OCI-LY7 (cell line): ENCODE measurements at regions of chr1 and their contacts with region 1.

Region 1: GRCh38 chr1:27097484-27097917 is 57.4 kb downstream of the SLC9A1 start:
- DNase-seq: peak; percentile 72
- H3K4me3 ChIP-seq: no peak overlapping the region
- H3K27ac ChIP-seq: no peak overlapping the region
- H3K4me1 ChIP-seq: peaks cover 15% of the 10 kb centered on the region
- CTCF ChIP-seq: peak; percentile 96

Region 2: DNA sequence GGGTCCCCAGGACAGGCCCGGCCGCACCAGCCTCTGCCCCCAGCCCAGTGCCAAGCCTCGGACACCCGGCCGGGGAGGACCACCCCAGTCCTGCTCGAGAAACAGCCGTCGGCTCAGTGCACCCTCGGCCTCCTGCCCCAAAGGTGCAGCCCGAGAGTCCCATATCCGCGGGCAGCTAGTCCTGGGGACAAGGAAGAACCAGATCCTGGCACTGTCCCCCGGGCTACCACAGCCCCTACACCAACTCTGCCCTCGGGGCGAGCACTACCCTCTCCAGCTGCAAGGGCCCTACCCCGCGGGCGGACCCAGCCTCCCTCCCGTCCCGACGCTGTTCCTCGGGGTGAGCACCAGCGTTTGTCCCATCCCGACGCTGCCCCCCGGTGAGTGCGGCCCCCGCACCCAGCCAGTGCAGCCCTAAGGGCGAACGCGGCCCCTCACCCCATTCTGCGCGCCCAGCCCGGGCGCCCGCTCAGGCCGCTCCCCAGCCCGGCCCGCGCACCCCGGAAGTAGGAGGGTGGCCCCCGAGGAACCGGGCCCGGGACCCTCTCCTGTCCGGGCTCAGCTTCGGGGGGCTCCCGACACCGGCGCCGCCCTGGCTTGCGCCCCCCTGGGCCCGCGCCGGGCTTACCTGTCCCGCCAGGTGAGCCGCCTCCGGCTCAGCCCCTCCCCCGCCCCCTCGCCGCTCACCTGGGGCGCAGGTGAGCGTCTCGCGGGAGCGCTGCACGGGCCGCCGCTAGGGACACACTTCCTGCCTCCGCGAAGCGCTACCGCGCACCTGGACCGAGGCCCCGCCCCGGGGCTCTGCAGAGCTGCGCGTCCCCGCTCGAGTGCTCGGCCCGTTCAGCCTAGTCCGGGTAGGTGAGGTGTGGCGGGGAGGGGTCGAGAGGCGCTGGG is 137.5 kb before region 1 on chr1 and contains the start of gene KDF1:
- CTCF ChIA-PET with region 1: no interaction called
- POLR2A ChIA-PET with region 1: no interaction called
- intact Hi-C with region 1: loop called (anchors 10 kb)
- DNase-seq: no peak
- H3K4me3 ChIP-seq: no peak within 1 kb of the TSS
- H3K27ac ChIP-seq: no peak within 1 kb of the TSS
- H3K4me1 ChIP-seq: no peaks in the 10 kb centered on the region
- CTCF ChIP-seq: no peak
- total RNA-seq, gene KDF1: not detected in 2 replicates

Region 3: GRCh38 chr1:26996665-26997064 is 100.8 kb before region 1 on chr1:
- CTCF ChIA-PET with region 1: no interaction called
- POLR2A ChIA-PET with region 1: interaction called, 4 read pairs
- intact Hi-C with region 1: loop called (anchors 1 kb)
- DNase-seq: no peak
- H3K4me3 ChIP-seq: no peak overlapping the region
- H3K27ac ChIP-seq: no peak overlapping the region
- H3K4me1 ChIP-seq: peaks cover 2% of the 10 kb centered on the region
- CTCF ChIP-seq: no peak

Region 4: GRCh38 chr1:27044613-27045151 is 52.8 kb before region 1 on chr1:
- CTCF ChIA-PET with region 1: interaction called, 4 read pairs
- POLR2A ChIA-PET with region 1: interaction called, 4 read pairs
- intact Hi-C with region 1: loop called (anchors 1 kb)
- DNase-seq: peak; percentile 86
- H3K4me3 ChIP-seq: no peak overlapping the region
- H3K27ac ChIP-seq: no peak overlapping the region
- H3K4me1 ChIP-seq: peaks cover 12% of the 10 kb centered on the region
- CTCF ChIP-seq: peak; percentile 88

Region 5: GRCh38 chr1:27111626-27112573 is 14.4 kb after region 1 on chr1:
- CTCF ChIA-PET with region 1: interaction called, 26 read pairs
- POLR2A ChIA-PET with region 1: no interaction called
- intact Hi-C with region 1: no loop called
- DNase-seq: peak; percentile 80
- H3K4me3 ChIP-seq: no peak overlapping the region
- H3K27ac ChIP-seq: peak overlapping the region; percentile 37
- H3K4me1 ChIP-seq: peaks cover 21% of the 10 kb centered on the region
- CTCF ChIP-seq: peak; percentile 64

Region 6: GRCh38 chr1:27402349-27402754 is 304.9 kb after region 1 on chr1:
- CTCF ChIA-PET with region 1: no interaction called
- POLR2A ChIA-PET with region 1: no interaction called
- intact Hi-C with region 1: no loop called
- DNase-seq: no peak
- H3K4me3 ChIP-seq: no peak overlapping the region
- H3K27ac ChIP-seq: peak overlapping the region; percentile 86
- H3K4me1 ChIP-seq: peaks cover 53% of the 10 kb centered on the region
- CTCF ChIP-seq: no peak